ENCODE measurements at regions of chr1 and their contacts with region 1.

Region 1: DNA sequence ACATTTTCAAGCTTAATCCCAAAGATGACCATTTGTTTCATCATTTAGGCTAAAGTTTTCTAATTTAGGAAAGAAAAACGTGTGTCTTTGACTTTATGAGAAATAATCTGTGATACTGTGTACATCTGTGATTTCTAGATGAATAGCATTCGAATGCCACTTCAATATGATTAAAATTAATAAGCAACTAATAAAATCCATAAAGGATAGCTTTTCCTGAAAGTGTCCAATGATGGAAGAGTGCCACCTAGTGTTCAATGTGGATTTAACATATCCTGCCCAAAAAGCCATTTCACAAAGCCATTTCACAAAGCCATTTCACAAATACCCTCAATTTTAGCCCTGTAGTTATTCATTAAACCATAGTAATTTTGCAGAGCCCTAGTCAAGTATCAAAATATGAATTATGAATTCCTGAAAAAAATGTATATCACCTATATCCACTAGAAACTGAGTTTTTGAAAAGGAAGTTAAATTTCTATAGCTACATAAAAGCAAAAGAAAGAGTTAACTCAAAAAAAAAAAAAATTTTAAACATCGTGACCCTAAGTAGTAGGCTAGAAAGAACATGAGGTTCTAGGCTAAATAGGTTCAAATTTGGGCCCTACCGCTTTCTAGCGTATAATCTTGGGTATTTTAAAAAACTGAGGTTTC is 19.1 kb downstream of the NME7 start:
- DNase-seq: no peak
- ATAC-seq: no peak
- H3K4me3 Mint-ChIP-seq: no peak overlapping the region
- H3K27ac Mint-ChIP-seq: no peak overlapping the region
- H3K4me1 Mint-ChIP-seq: peaks cover 20% of the 10 kb centered on the region
- H3K27me3 Mint-ChIP-seq: no peaks in the 10 kb centered on the region
- CTCF ChIP-seq: peak; percentile 96

Region 2: DNA sequence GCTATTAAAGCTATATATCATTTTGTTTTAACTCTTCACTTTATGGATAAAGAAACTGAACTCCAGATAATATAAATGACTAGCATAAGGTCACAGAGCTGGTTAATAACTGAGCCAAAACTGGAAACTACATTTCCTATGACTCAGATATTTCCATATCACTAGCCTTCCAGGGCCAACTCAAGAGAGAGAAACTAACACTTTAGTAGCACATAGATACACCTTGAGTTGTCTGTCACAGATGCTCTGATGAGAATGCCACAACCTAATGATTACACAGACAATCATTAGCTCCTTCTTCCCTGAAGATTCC is 21.6 kb before region 1 on chr1:
- CTCF ChIA-PET with region 1: interaction called, 16 read pairs
- POLR2A ChIA-PET with region 1: no interaction called
- intact Hi-C with region 1: no loop called
- DNase-seq: no peak
- ATAC-seq: peak; percentile 95
- H3K4me3 Mint-ChIP-seq: no peak overlapping the region
- H3K27ac Mint-ChIP-seq: peak overlapping the region; percentile 78
- H3K4me1 Mint-ChIP-seq: peaks cover 25% of the 10 kb centered on the region
- H3K27me3 Mint-ChIP-seq: no peaks in the 10 kb centered on the region
- CTCF ChIP-seq: no peak